PC-3 (cell line): ENCODE measurements at regions of chr1 and their contacts with region 1.

Region 1: GRCh38 chr1:78132174-78132947 is 86.6 kb downstream of the GIPC2 start:
- DNase-seq: no peak
- ATAC-seq: peak; percentile 20; the same call in 1 of the 2 replicates
- H3K4me3 ChIP-seq: no peak overlapping the region
- H3K27ac ChIP-seq: no peak overlapping the region
- H3K4me1 ChIP-seq: peaks cover 6% of the 10 kb centered on the region
- H3K27me3 ChIP-seq: no peaks in the 10 kb centered on the region
- CTCF ChIP-seq: no peak

Region 2: DNA sequence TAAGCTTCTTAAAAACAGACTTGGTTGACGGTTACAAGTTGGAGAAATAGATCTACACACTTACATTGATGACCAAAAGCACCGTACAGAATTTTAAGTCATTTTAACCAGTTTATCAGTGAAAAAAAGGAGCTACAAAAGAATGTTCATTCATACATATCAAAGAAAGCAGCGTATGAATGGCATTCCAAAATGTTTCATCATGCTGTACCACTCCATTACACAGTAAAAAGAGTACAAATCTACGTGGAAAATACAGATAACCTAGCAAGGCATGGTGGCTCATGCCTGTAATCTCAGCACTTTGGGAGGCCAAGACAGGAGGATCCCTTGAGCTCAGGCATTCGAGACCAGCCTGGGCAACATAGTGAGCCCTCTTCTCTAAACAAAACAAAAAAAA is 490.2 kb before region 1 on chr1:
- CTCF ChIA-PET with region 1: no interaction called
- POLR2A ChIA-PET with region 1: no interaction called
- intact Hi-C with region 1: no loop called
- DNase-seq: no peak
- ATAC-seq: no peak
- H3K4me3 ChIP-seq: no peak overlapping the region
- H3K27ac ChIP-seq: no peak overlapping the region
- H3K4me1 ChIP-seq: peaks cover 13% of the 10 kb centered on the region
- H3K27me3 ChIP-seq: no peaks in the 10 kb centered on the region
- CTCF ChIP-seq: no peak

Region 3: DNA sequence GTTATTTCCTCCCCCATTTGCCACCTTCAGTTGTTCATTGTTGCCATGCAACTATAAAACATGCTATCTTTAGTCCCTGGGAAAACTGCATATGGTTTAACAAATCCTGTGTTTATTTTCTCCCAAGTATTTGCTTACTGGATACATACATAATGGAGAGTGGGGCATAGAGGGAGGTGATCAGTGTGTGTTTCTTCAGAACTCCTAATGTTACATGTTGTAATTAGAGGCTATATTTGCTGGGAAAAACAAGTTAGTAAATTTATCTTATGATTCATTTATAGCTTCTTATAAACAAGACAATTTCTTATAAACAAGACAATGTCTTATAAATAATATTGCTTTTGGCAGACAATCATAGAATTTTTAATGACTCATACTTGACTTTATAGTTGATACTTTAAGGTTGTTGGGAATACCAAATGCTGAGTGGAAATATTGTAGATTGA is 93.8 kb before region 1 on chr1:
- CTCF ChIA-PET with region 1: no interaction called
- POLR2A ChIA-PET with region 1: no interaction called
- intact Hi-C with region 1: no loop called
- DNase-seq: peak; percentile 79
- ATAC-seq: peak; percentile 85
- H3K4me3 ChIP-seq: no peak overlapping the region
- H3K27ac ChIP-seq: peak overlapping the region; percentile 74
- H3K4me1 ChIP-seq: peaks cover 13% of the 10 kb centered on the region
- H3K27me3 ChIP-seq: no peaks in the 10 kb centered on the region
- CTCF ChIP-seq: no peak

Region 4: GRCh38 chr1:78491451-78492071 is 359.2 kb after region 1 on chr1:
- CTCF ChIA-PET with region 1: no interaction called
- POLR2A ChIA-PET with region 1: no interaction called
- intact Hi-C with region 1: loop called (anchors 5 kb)
- DNase-seq: peak; percentile 58
- ATAC-seq: peak; percentile 69
- H3K4me3 ChIP-seq: peak overlapping the region; percentile 78
- H3K27ac ChIP-seq: peak overlapping the region; percentile 43
- H3K4me1 ChIP-seq: peaks cover 14% of the 10 kb centered on the region; the same call in 1 of the 2 replicates
- H3K27me3 ChIP-seq: no peaks in the 10 kb centered on the region
- CTCF ChIP-seq: no peak